Prostate gland (tissue), 2 donors: ENCODE measurements at regions of chr4 and their contacts with region 1.

Region 1: GRCh38 chr4:77959566-77960338 is 97.1 kb downstream of the MRPL1 start:
- DNase-seq: peak; percentile 23
- H3K4me3 ChIP-seq: no peak overlapping the region
- H3K27ac ChIP-seq: no peak overlapping the region
- H3K4me1 ChIP-seq: no peaks in the 10 kb centered on the region
- H3K27me3 ChIP-seq: no peaks in the 10 kb centered on the region
- CTCF ChIP-seq: peak; percentile 41 to 75 (median 62)
- POLR2A ChIP-seq: no peak

Region 2: GRCh38 chr4:77156533-77156911 is 803.2 kb before region 1 on chr4:
- intact Hi-C with region 1: no loop called
- DNase-seq: peak; percentile 99
- H3K4me3 ChIP-seq: peak overlapping the region; percentile 83 to 100
- H3K27ac ChIP-seq: peak overlapping the region; percentile 96 to 99
- H3K4me1 ChIP-seq: no peaks in the 10 kb centered on the region
- H3K27me3 ChIP-seq: no peaks in the 10 kb centered on the region
- CTCF ChIP-seq: no peak
- POLR2A ChIP-seq: peak; percentile 87

Region 3: DNA sequence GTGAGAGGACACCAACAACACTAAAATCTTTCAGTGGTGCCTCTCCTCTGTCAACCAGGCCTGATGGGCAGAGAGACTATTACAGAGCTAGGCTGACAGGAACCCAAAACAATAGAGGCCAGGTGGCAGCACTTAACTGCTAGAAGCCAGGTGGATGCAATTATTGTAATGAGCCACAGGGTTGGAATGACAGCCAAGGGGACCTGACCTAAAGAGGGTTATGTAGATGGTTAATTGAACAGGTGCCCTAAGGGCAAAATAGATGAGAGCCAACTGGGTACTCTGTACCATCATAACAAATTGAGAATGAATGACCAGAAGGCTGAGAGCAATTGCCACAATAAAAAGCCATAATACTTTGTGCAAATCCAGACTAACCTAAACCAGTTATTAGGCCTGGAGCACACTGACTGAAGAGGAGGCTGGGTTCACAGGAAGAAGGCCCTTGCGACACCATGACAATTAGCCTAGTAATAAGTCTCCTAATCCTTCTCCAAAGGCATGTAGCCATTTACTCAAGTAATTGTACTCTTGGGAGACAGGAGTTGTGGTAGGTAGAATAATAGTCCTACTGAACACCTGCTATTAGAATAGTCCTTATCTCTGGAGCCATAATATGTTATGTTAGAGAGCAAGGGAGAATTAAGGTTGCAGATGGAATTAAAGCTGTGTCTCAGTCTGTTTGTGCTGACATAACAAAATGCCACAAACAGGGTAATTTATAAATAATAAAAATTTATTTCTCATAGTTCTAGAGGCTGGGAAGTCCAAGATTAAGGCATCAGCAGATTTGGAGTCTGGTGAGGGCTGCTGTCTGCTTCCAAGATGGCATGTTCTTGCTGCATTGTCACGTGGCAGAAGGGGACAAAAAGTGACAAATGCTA is 72.9 kb after region 1 on chr4:
- intact Hi-C with region 1: no loop called
- DNase-seq: no peak
- H3K4me3 ChIP-seq: no peak overlapping the region
- H3K27ac ChIP-seq: no peak overlapping the region
- H3K4me1 ChIP-seq: no peaks in the 10 kb centered on the region
- H3K27me3 ChIP-seq: no peaks in the 10 kb centered on the region
- CTCF ChIP-seq: no peak
- POLR2A ChIP-seq: no peak

Region 4: DNA sequence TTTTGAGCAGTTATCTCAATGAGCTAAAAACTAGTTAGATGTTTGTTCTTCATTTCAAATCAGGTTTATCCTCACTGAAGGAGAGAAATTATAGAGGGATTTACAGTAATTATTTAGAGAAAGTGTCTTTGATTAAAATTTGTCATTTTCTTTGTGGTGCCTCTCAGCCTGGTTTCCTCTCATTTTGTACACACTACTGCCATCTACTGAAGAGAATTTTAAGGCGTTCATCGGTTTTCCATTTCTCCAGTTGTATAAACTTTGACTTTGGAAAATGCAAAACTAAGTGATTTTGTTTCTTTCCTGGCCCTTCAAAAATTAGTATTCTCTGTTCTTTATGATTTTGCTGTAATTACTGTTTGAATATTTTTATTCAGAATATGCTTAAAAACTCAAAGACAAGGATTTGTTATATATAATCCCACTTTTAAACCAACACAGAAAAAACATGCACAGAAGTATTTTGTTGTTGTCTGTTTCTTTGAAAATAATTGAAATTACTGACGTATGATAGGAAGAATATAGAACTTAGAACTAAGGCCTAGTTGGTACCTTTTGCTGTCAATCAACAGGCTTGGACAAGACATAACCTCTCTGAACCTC is 557.4 kb after region 1 on chr4:
- intact Hi-C with region 1: loop called (anchors 2 kb)
- DNase-seq: no peak
- H3K4me3 ChIP-seq: no peak overlapping the region
- H3K27ac ChIP-seq: no peak overlapping the region
- H3K4me1 ChIP-seq: no peaks in the 10 kb centered on the region
- H3K27me3 ChIP-seq: no peaks in the 10 kb centered on the region
- CTCF ChIP-seq: peak in 3 of 4 experiments; percentile 45 to 77 (median 72)
- POLR2A ChIP-seq: no peak